Common myeloid progenitor, CD34-positive (primary cell): ENCODE measurements at regions of chr3 and their contacts with region 1.

Region 1: DNA sequence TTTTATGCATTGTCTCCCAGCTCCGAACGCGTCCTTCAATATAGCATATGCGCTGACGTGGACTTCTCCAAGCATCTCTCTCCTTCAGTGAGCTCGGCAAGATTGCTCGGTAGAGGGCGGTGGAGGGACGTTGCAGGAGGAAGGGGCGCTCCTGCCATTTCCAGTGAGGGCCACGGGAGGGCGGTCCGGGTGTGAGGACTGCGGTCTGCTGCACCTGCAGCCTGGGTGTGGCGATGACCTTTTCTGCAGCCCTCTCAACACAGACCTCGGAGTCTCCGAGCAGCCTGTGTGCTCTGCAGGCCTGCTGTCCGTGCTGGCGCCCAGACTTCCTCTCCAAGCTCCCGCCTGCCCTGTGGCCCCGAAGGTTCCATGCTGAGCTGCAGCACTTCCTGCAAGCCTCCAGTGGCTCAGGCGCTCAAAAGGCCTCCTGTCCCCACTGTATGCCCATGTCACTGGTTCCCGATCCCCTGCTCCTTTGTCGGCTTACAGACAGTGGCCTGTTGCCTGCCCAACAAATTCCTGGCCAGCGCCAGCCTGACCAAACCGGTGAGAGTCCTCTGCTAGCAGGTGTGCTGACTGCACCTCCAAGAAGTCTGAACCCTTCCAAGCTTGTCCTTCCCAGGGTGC is 8.9 kb upstream of the RTP3 start:
- DNase-seq: peak; percentile 91 to 94 (median 93)
- H3K4me3 ChIP-seq: peak overlapping the region in 3 of 7 experiments; percentile 35 to 71 (median 61)
- H3K27ac ChIP-seq: no peak overlapping the region
- H3K4me1 ChIP-seq: peaks cover 0 to 19% (median 9%) of the 10 kb centered on the region in 4 experiments
- H3K27me3 ChIP-seq: peaks cover 0 to 3% (median 0%) of the 10 kb centered on the region in 5 experiments

Region 2: DNA sequence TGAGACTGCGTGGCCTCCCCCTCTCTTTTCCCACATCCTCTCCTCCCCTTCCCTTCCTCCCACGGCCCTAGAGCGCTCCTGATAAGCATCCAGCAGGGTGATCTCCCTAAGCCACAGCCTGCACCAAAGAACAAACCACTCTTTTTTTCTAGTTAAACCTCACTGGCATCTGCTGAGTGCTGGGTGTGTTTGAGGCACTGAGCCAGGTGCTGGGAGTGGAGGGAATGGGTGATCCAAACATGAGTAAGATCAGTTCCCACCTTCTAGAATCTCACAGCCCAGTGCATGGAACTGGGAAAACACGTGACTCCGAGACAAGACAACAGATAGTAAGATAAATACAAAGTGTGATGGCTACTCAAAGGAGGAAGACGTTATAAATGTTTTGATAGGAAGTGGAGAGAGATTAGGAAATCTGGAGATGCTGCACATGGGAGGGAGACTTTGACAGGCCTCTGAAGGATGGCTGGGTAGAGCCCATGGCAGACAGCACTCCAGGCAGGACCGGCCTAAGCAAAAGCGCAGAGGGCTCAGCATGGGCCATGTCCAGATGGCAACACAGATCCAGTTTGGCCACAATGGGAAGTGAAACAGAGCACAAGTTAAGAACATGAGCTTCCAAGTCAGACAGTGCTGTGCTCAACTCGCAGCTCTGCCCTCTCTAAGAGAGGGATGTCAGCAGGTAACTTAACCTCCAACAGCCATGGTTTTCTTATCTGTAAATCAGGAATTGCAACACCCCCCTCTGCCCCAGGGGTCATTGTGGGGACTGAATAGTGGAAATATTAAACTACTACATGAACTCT is 191.0 kb before region 1 on chr3:
- CTCF ChIA-PET with region 1: no interaction called
- POLR2A ChIA-PET with region 1: no interaction called
- DNase-seq: peak in 1 of 3 donors; percentile 35
- H3K4me3 ChIP-seq: no peak overlapping the region
- H3K27ac ChIP-seq: no peak overlapping the region
- H3K4me1 ChIP-seq: peaks cover 14 to 56% (median 42%) of the 10 kb centered on the region in 4 experiments
- H3K27me3 ChIP-seq: no peaks in the 10 kb centered on the region

Region 3: DNA sequence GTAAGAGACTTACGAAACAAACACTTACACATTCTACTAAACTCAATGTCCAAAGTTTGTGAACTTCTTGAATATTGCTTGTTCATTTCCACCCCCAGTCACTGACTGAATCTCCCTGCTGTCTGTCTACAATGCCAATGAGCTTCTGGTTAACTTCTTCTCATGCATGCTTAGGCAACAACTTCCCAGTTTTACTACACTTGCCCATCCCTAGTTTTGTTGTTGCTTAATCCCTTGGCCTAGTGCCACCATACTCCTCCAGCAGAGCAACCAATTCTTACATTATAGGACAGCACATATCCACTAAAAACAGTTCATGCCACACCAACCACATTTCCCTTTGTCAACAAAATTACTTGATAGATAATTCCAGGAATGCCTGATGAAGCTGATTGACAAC is 175.9 kb before region 1 on chr3:
- CTCF ChIA-PET with region 1: no interaction called
- POLR2A ChIA-PET with region 1: no interaction called
- DNase-seq: peak in 1 of 3 donors; percentile 29
- H3K4me3 ChIP-seq: no peak overlapping the region
- H3K27ac ChIP-seq: no peak overlapping the region
- H3K4me1 ChIP-seq: peaks cover 0 to 22% (median 0%) of the 10 kb centered on the region in 4 experiments
- H3K27me3 ChIP-seq: no peaks in the 10 kb centered on the region

Region 4: GRCh38 chr3:46449755-46450552 is 38.9 kb before region 1 on chr3:
- CTCF ChIA-PET with region 1: interaction called, 10 read pairs
- POLR2A ChIA-PET with region 1: no interaction called
- DNase-seq: no peak
- H3K4me3 ChIP-seq: no peak overlapping the region
- H3K27ac ChIP-seq: no peak overlapping the region
- H3K4me1 ChIP-seq: peaks cover 0 to 25% (median 0%) of the 10 kb centered on the region in 4 experiments
- H3K27me3 ChIP-seq: no peaks in the 10 kb centered on the region

Region 5: DNA sequence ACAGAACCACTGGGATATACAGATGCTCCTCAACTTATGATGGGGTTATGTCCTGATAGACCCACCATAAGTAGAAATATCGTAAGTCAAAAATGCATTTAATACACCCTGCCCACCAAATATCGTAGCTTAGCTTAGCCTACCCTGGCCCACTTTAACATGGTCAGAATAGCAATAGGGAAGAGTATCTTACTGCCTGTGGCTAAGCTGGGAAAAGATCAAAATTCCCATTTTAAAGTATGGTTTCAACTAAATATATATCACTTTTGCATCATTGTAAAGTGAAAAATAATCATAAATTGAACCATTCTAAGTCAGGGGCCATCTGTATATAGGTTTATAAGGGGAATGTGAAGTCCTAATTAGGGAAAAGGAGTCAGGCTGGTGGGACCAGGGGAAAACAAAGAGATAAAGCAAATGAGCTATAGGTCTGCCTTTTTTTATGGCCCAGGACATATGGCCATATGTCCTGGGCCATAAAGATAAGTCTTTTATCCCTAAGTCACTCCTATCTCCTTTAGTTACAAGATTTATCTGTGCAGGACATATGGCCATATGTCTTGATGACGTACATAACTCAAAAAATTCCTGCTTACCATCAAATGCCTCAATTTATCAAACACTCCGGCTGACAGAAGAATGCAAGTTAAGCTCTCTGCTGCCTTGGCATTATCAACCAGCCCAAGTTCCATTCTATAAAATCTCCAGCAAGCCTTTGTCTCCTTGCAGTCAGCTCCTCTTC is 20.2 kb after region 1 on chr3:
- CTCF ChIA-PET with region 1: interaction called, 13 read pairs
- POLR2A ChIA-PET with region 1: no interaction called
- DNase-seq: peak in 1 of 3 donors; percentile 29
- H3K4me3 ChIP-seq: no peak overlapping the region
- H3K27ac ChIP-seq: no peak overlapping the region
- H3K4me1 ChIP-seq: no peaks in the 10 kb centered on the region
- H3K27me3 ChIP-seq: no peaks in the 10 kb centered on the region

Region 6: GRCh38 chr3:46538803-46539442 is 50.1 kb after region 1 on chr3:
- CTCF ChIA-PET with region 1: interaction called, 23 read pairs
- POLR2A ChIA-PET with region 1: interaction called, 7 read pairs
- DNase-seq: peak; percentile 79 to 95 (median 91)
- H3K4me3 ChIP-seq: peak overlapping the region in 6 of 7 experiments; percentile 29 to 70 (median 42)
- H3K27ac ChIP-seq: peak overlapping the region; percentile 19 to 65
- H3K4me1 ChIP-seq: peaks cover 17 to 43% (median 35%) of the 10 kb centered on the region in 4 experiments
- H3K27me3 ChIP-seq: no peaks in the 10 kb centered on the region

Region 7: DNA sequence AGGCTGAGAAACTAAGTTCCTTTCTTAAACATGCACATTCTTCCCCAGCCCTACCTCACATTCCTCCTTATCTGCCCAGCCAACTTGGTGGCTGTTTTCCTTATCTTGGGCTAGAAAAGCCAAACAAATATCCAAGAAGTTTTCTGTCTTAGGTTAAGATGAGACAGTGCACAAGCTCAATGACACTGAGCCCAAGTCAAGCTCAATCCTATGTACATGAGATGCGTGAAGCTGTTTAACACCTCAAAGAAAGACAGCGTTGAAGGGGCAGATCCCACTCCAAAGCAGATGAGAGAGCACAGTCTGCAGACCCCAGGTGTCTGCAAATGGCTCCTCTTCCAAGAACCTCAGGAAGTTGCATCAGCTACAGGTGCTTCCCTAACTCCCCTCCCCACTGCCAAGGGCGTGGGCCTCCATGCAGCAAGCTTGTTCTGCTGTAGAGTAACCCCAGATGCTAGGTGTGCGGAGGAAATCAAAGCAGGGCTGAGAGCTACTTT is 60.6 kb after region 1 on chr3:
- CTCF ChIA-PET with region 1: interaction called, 47 read pairs
- POLR2A ChIA-PET with region 1: no interaction called
- DNase-seq: peak in 2 of 3 donors; percentile 58 to 77
- H3K4me3 ChIP-seq: peak overlapping the region in 1 of 7 experiments; percentile 33
- H3K27ac ChIP-seq: peak overlapping the region in 1 of 2 experiments; percentile 43
- H3K4me1 ChIP-seq: peaks cover 3 to 13% (median 7%) of the 10 kb centered on the region in 4 experiments
- H3K27me3 ChIP-seq: no peaks in the 10 kb centered on the region

Region 8: GRCh38 chr3:46558184-46559043 is 69.6 kb after region 1 on chr3:
- CTCF ChIA-PET with region 1: interaction called, 184 read pairs
- POLR2A ChIA-PET with region 1: interaction called, 7 read pairs
- DNase-seq: peak; percentile 88 to 90 (median 89)
- H3K4me3 ChIP-seq: peak overlapping the region in 6 of 7 experiments; percentile 44 to 89 (median 68)
- H3K27ac ChIP-seq: no peak overlapping the region
- H3K4me1 ChIP-seq: peaks cover 0 to 8% (median 2%) of the 10 kb centered on the region in 4 experiments
- H3K27me3 ChIP-seq: no peaks in the 10 kb centered on the region

Region 9: GRCh38 chr3:46629551-46630517 is 141.0 kb after region 1 on chr3:
- CTCF ChIA-PET with region 1: interaction called, 81 read pairs
- POLR2A ChIA-PET with region 1: interaction called, 3 read pairs
- DNase-seq: peak; percentile 77 to 86 (median 85)
- H3K4me3 ChIP-seq: peak overlapping the region in 5 of 7 experiments; percentile 56 to 78 (median 70)
- H3K27ac ChIP-seq: peak overlapping the region in 1 of 2 experiments; percentile 44
- H3K4me1 ChIP-seq: peaks cover 0 to 12% (median 9%) of the 10 kb centered on the region in 4 experiments
- H3K27me3 ChIP-seq: no peaks in the 10 kb centered on the region